Posterior cingulate gyrus (tissue), 11 donors: ENCODE measurements at regions of chr3 and their contacts with region 1.

Region 1: DNA sequence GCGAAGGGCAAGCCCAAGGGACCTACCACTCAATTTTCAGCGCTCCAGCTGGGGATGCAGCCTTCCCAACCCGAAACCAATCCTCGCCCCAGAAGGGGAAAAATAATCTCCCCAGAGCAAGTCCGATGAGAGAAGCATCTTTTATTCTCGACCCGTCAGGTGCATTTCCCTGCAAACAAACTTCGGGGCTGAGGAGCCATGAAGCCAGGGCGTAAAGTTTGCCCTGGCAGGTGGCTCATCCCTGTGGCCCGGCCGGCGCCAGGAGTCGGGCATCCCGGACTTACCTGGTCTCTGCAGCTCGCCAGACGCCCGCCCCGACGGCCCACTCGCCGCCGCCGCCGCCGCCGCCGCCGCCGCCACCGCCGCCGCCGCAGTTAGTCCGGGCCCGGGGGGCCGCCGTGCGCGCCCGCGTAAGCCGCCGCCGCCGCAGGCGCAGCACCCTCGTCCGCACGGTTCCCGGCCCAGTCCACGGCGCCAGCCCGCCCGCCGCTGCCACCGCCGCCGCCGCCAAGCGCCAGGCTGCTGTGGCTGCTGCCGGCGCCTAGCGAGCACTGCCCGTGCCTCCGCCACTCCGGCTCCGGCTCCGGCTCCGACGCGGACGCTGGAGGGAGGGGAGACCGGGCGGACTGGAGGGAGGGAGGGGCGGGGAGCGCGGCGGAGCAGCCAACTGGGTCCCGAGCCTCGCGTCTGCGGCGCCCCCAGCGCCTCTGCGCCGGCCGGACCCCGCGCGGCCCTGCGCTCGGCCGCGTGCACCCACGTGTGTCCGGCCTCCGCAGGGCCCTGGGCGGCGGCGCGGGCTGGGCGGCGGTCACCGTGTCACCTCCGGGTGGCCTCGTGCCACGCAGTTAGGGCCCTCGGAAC is at the start of gene CNTN3:
- DNase-seq: peak in 8 of 10 donors; percentile 17 to 88 (median 44)

Region 2: DNA sequence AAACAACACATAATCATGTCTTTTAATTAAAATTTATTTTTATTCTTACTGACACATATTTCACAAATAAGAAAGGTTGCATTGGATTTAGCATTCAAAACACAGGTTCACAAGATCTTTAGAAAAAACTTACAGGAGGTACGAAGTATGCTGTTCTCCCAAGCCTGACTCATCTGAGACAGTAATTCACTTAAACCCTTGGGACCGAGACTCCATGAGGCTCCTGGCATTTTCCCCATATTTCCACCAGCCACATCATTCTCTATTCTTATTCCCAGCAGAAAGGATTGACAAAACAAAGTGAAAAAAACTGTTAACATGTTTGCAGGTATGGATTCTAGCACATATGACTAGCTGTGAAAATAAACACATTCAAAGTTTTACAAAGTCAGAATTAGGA is 52.5 kb before region 1 on chr3:
- intact Hi-C with region 1: loop called (anchors 10 kb)
- DNase-seq: no peak

Region 3: DNA sequence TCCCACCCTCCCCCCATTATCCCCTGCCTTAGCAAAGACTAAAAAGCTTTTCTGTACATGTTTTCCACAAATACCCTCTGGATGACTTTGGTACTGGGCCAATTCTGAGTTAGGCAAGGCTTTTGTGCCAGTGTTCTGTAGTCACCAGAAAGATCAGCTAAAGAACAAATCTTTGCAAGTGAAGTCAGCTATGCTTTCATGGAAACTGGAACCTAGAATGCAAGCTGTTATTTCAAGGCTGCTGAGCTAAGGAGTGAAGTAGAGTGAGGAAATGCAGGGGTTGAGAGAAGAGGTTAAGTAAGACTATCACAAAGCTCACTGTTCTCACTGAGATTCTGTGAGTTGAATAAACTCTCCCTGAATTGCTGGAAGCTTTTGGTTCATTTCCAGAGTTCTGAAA is 107.9 kb after region 1 on chr3:
- intact Hi-C with region 1: no loop called
- DNase-seq: no peak